Activated CD4-positive, alpha-beta memory T cell treated with anti-CD3 and anti-CD28 coated beads for 36 hours (primary cell): ENCODE measurements at regions of chrX and their contacts with region 1.

Region 1: DNA sequence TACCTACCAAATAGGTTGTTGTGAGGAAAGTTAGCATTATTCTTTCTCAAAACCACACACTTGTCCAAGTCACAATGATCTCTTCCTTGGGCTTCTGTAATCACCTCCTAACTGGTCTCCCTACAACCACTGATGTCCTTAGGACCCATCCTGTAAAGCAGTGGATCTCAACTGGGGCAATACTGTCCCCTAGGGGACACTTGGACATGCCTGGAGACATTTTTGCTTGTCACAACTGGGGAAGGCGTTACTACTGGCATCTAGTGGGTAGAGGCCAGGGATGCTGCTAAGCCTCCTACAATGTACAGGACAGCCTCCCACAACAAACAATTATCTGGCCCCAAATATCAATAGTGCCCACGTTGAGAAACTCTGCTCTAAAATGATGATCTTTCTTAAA is 118.7 kb upstream of the AP1S2 start:
- DNase-seq: peak; percentile 30
- H3K4me3 Mint-ChIP-seq: no peak overlapping the region
- H3K27ac Mint-ChIP-seq: no peak overlapping the region
- H3K4me1 Mint-ChIP-seq: no peaks in the 10 kb centered on the region
- H3K27me3 Mint-ChIP-seq: no peaks in the 10 kb centered on the region

Region 2: DNA sequence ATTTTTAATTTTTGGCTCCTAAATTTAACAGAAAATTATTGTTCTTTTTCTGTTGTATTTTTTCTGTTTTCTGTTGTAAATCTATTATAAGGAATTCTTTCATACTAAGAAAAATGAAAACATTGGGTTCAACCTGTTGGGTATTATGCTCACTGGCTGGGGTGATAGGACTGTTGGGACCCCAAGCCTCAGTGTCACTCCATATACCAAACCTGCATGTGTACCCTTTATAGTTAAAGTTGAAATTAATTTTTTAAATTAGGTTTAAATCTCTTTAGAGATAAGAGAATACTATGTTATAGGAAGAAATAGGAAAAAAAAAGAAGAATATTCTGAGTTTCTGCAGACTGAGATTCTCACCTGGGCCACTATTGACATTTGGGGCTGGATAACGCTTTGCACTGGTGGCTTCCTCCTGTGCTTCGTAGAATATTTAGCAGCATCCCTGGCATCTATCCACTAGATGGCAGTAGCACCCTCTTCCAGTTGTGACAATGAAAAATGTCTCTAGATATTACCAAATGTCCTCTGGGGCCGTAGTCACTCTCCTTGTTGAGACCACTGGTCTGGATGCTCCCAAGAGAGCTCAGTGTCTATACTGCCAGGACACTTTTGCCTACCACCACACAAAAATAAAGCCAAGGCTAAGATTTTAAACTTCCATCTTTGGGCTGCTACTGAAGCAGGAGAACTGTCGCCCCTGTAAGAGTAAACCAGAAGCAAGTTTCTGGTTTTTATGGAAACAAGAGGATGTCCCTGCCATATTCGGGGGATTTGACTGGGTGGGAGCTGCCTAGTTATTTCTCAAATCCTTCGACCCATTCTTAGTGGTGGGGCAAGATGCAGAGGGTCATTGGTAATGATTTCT is 286.2 kb before region 1 on chrX:
- CTCF ChIA-PET with region 1: no interaction called
- POLR2A ChIA-PET with region 1: no interaction called
- intact Hi-C with region 1: loop called (anchors 1 kb)
- DNase-seq: peak; percentile 55
- H3K4me3 Mint-ChIP-seq: no peak overlapping the region
- H3K27ac Mint-ChIP-seq: no peak overlapping the region
- H3K4me1 Mint-ChIP-seq: peaks cover 8% of the 10 kb centered on the region
- H3K27me3 Mint-ChIP-seq: no peaks in the 10 kb centered on the region